Adrenal gland (tissue), 19 donors: ENCODE measurements at regions of chr4 and their contacts with region 1.

Region 1: GRCh38 chr4:15479089-15479912 is 9.6 kb downstream of the CC2D2A start:
- DNase-seq: peak; percentile 50 to 73 (median 67)
- H3K4me3 ChIP-seq: peak overlapping the region; percentile 6 to 53 (median 22)
- H3K27ac ChIP-seq: peak overlapping the region; percentile 36 to 81 (median 45)
- H3K4me1 ChIP-seq: peaks cover 4 to 10% of the 10 kb centered on the region in 2 donors
- H3K27me3 ChIP-seq: no peaks in the 10 kb centered on the region
- CTCF ChIP-seq: peak; percentile 43 to 80 (median 70)
- POLR2A ChIP-seq: peak in 1 of 2 donors; percentile 29

Region 2: GRCh38 chr4:15368856-15369255 is 110.4 kb before region 1 on chr4:
- intact Hi-C with region 1: no loop called
- DNase-seq: no peak
- H3K4me3 ChIP-seq: no peak overlapping the region
- H3K27ac ChIP-seq: no peak overlapping the region
- H3K4me1 ChIP-seq: no peaks in the 10 kb centered on the region
- H3K27me3 ChIP-seq: no peaks in the 10 kb centered on the region
- CTCF ChIP-seq: no peak
- POLR2A ChIP-seq: no peak

Region 3: DNA sequence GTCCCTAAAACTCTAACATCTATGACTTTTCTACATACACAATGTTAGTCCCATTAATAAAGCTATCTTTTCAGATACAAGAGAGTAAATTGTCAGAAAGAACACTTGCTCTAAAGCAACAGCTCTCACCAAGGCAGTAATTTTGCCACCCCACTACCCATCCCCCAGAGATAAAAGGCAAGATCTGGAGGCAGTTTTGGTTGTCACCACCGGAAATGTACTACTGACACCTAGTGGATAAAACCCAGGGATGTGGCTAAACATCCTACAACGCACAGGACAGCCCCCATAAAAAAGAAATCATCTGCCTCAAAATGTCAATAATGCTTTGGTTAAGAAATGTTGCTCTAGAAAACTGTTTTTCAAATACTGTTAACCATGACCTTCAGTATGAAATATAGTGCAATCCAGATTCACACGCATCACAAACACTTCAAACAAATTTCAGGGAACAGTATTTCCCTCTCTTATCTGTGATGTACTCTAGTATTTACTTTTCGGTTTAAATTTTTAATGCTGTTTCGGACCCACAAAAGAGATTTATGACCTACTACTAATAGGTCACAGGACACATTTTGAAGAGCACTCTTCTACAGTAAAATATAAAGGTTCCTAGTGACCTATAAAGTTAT is 170.7 kb after region 1 on chr4:
- intact Hi-C with region 1: loop called in 1 of 2 experiments (anchors 5 kb)
- DNase-seq: peak; percentile 43 to 75 (median 65)
- H3K4me3 ChIP-seq: no peak overlapping the region
- H3K27ac ChIP-seq: peak overlapping the region in 3 of 5 donors; percentile 43 to 100 (median 44)
- H3K4me1 ChIP-seq: peaks cover 37 to 78% of the 10 kb centered on the region in 2 donors
- H3K27me3 ChIP-seq: no peaks in the 10 kb centered on the region
- CTCF ChIP-seq: peak; percentile 32 to 74 (median 64)
- POLR2A ChIP-seq: no peak